ENCODE measurements at regions of chr3 and their contacts with region 1.

Region 1: DNA sequence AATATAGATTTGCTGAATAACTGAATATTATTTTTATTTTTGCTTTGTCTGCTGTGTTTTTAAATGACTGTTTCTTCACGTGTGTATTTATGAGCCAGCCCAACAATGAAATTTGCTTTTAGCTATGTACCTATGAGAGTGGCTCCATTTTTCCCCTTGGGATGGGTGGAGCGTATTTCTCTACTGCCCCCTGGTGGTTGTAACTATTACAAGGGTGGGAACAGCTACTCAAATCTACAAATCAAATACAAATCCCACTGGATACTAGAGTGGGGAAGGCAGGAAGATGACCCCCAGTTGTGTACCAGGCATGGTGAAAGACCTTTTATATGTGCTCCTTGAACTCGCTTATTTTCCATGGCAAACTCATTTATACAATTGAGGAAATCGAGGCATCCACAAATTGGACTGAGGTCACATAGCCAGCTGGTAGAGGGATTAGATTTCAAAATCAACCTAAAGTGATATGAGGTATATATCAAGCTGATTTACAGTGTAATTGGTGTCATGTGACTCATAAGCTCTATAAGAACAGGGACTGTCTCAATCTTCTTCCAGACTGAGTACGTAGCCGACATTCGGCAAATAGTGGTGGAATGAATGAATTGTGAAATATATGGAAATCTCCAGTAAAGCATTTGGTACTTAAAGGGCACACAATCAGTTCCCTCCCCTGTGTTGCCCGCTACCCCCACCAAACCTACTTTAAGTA is 69.5 kb upstream of the VEPH1 start:
- DNase-seq: no peak
- H3K4me3 ChIP-seq: no peak overlapping the region
- H3K27ac ChIP-seq: no peak overlapping the region
- H3K4me1 ChIP-seq: no peaks in the 10 kb centered on the region
- H3K27me3 ChIP-seq: no peaks in the 10 kb centered on the region
- CTCF ChIP-seq: peak in 2 of 3 experiments; percentile 64 to 75; a peak in 3 of 4 replicates
- EP300 ChIP-seq: no peak
- POLR2A ChIP-seq: no peak
- RAD21 ChIP-seq: peak; percentile 68 to 72

Region 2: GRCh38 chr3:157527131-157527881 is 45.4 kb before region 1 on chr3:
- CTCF ChIA-PET with region 1: interaction called, 116 read pairs
- POLR2A ChIA-PET with region 1: interaction called, 16 read pairs
- DNase-seq: no peak
- H3K4me3 ChIP-seq: no peak overlapping the region
- H3K27ac ChIP-seq: no peak overlapping the region
- H3K4me1 ChIP-seq: peaks cover 0 to 2% (median under 1%) of the 10 kb centered on the region in 4 experiments; a peak in 2 of 7 replicates
- H3K27me3 ChIP-seq: no peaks in the 10 kb centered on the region
- CTCF ChIP-seq: no peak
- EP300 ChIP-seq: no peak
- POLR2A ChIP-seq: no peak
- RAD21 ChIP-seq: no peak

Region 3: DNA sequence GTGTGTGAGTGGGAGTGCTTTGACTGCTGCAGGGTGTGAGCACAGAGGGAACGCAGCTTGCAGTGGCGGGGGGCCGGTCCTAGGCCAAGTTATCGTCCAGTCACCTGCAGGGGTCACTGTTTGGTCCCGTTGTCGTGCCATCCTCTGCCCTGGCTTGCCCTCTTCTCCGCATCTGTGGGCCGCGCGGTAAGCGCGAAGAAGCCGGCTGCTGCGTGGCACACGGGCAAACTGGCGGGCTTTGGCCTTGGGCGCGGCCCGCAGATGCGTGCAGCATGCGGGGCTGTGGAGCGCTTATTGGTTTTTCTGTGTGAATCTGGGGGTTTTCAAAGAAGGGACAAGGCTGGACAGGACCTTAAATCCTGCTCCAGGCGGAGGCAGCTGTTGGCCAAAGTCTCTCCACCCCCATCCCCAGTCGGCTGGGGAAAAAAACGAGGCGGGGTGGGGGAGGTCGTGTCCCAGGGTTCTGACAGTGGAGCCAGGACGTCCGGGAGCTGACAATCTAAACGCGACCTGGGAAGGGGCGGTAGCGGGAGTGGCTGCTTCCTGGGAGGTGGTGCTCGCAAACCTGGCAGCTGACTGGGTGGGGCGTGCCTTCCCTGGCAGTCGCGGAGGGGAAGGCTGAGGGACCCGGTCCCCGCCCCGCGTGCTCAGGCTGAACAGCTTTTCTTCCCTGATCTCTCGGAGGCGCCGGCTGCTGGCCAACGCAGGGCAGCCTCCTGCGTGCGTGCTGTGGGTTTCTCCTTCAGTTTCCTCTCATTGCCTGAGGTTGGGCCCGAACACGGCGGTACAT is 29.8 kb before region 1 on chr3:
- CTCF ChIA-PET with region 1: interaction called, 48 read pairs
- POLR2A ChIA-PET with region 1: no interaction called
- DNase-seq: peak; percentile 25 to 85
- H3K4me3 ChIP-seq: peak overlapping the region; percentile 22 to 65 (median 39)
- H3K27ac ChIP-seq: no peak overlapping the region
- H3K4me1 ChIP-seq: no peaks in the 10 kb centered on the region; a peak in 1 of 7 replicates
- H3K27me3 ChIP-seq: peaks cover 0 to 5% (median 0%) of the 10 kb centered on the region in 4 experiments; a peak in 1 of 7 replicates
- CTCF ChIP-seq: peak; percentile 56 to 89 (median 86)
- EP300 ChIP-seq: no peak
- POLR2A ChIP-seq: no peak
- RAD21 ChIP-seq: peak; percentile 34 to 45; a peak in 3 of 4 replicates

Region 4: GRCh38 chr3:157559401-157559800 is 13.3 kb before region 1 on chr3:
- CTCF ChIA-PET with region 1: interaction called, 23 read pairs
- POLR2A ChIA-PET with region 1: no interaction called
- DNase-seq: no peak
- H3K4me3 ChIP-seq: no peak overlapping the region
- H3K27ac ChIP-seq: no peak overlapping the region
- H3K4me1 ChIP-seq: no peaks in the 10 kb centered on the region
- H3K27me3 ChIP-seq: no peaks in the 10 kb centered on the region
- CTCF ChIP-seq: no peak
- EP300 ChIP-seq: no peak
- POLR2A ChIP-seq: no peak
- RAD21 ChIP-seq: no peak

Region 5: GRCh38 chr3:157594413-157594812 is 21.7 kb after region 1 on chr3:
- CTCF ChIA-PET with region 1: interaction called, 14 read pairs
- POLR2A ChIA-PET with region 1: no interaction called
- DNase-seq: no peak
- H3K4me3 ChIP-seq: no peak overlapping the region
- H3K27ac ChIP-seq: no peak overlapping the region
- H3K4me1 ChIP-seq: no peaks in the 10 kb centered on the region
- H3K27me3 ChIP-seq: no peaks in the 10 kb centered on the region
- CTCF ChIP-seq: peak; percentile 44 to 55 (median 54)
- EP300 ChIP-seq: no peak
- POLR2A ChIP-seq: no peak
- RAD21 ChIP-seq: peak in 1 of 2 experiments; percentile 34; a peak in 1 of 4 replicates